Stomach (tissue), 19 donors: ENCODE measurements at regions of chr2 and their contacts with region 1.

Region 1: GRCh38 chr2:44291281-44292248 is 16.3 kb downstream of the SLC3A1 start:
- DNase-seq: peak; percentile 84 to 91
- H3K4me3 ChIP-seq: no peak overlapping the region
- H3K27ac ChIP-seq: peak overlapping the region; percentile 41 to 78 (median 71)
- H3K4me1 ChIP-seq: peaks cover 21 to 54% (median 35%) of the 10 kb centered on the region in 4 donors
- H3K27me3 ChIP-seq: no peaks in the 10 kb centered on the region
- CTCF ChIP-seq: peak in 4 of 7 experiments; percentile 28 to 84 (median 45)
- EP300 ChIP-seq: no peak
- POLR2A ChIP-seq: no peak

Region 2: DNA sequence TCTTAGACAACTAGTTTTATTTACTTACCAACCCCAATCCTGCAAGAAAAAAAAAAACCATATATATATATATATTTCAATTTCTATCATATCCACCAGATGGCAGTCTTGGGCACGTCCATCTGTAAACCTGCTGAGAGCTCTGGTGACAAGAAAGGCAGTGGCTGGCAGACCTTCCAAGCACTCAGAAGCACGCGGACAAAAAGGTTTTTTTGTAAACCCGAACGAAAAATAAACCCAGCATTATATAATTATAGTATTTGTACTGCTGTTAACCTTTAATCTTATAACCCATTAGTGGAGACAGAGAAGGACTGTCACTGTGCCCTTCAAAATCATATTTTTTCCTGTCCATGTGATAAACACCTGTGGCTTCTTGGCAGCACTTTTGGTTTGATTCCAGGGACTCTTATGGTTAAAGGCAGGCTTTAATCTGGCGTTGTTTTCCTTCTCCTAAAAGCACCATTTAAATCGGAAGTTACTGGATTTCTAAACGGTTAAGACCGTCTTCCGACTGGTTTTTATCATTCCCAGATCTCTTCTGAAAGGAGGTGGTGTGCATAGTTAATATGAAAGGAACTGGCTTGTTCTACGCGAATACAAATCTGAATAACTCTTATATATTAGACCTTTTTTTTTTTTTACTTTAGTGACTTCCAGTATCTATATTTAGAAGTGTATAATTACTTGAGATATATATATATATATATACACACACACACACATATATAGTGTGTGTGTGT is 47.3 kb before region 1 on chr2:
- intact Hi-C with region 1: loop called (anchors 5 kb)
- DNase-seq: peak; percentile 76 to 93
- H3K4me3 ChIP-seq: peak overlapping the region; percentile 26 to 41 (median 30)
- H3K27ac ChIP-seq: peak overlapping the region; percentile 45 to 79 (median 72)
- H3K4me1 ChIP-seq: peaks cover 4 to 30% (median 17%) of the 10 kb centered on the region in 4 donors
- H3K27me3 ChIP-seq: no peaks in the 10 kb centered on the region
- CTCF ChIP-seq: peak in 4 of 7 experiments; percentile 20 to 66 (median 52)
- EP300 ChIP-seq: no peak
- POLR2A ChIP-seq: no peak